Activated CD8-positive, alpha-beta memory T cell treated with anti-CD3 and anti-CD28 coated beads, Interleukin-2, amount 10 ng/mL, durations not matched to agents 7 days and 5 days (primary cell): ENCODE measurements at regions of chr17 and their contacts with region 1.

Region 1: GRCh38 chr17:75250009-75250471 is 11.4 kb downstream of the GGA3 start:
- DNase-seq: peak; percentile 85
- ATAC-seq: peak; percentile 98
- H3K4me3 Mint-ChIP-seq: peak overlapping the region; percentile 75
- H3K27ac Mint-ChIP-seq: peak overlapping the region; percentile 90
- H3K4me1 Mint-ChIP-seq: peaks cover 28% of the 10 kb centered on the region
- H3K27me3 Mint-ChIP-seq: no peaks in the 10 kb centered on the region

Region 2: GRCh38 chr17:75199886-75200618 is 50.0 kb before region 1 on chr17:
- CTCF ChIA-PET with region 1: interaction called, 15 read pairs
- DNase-seq: no peak
- ATAC-seq: no peak
- H3K4me3 Mint-ChIP-seq: no peak overlapping the region
- H3K27ac Mint-ChIP-seq: no peak overlapping the region
- H3K4me1 Mint-ChIP-seq: peaks cover 11% of the 10 kb centered on the region
- H3K27me3 Mint-ChIP-seq: no peaks in the 10 kb centered on the region

Region 3: DNA sequence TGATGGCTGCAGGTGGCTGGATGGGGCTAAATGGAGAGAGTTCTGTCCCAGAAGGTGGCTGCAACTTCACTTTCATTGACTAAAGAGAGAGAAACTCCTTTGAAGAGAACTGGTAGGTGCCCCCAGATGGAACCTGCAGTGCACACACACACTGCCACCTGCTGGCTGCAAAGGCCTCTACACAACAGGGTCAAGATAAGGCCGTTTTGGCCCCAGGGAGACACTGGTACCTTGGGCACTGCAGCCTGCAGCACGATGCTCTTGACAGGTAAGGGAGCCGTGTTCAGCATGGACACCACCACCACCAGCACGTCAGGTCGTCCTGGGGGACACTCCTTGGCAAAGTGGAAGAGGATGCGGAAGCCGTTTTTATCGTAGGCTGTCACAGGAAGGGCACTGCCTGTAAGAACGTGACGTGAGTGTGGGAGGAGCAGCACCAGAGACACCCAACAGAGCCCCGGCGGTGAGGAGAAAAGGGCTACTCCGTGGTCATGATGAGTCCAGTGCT is 11.3 kb before region 1 on chr17:
- CTCF ChIA-PET with region 1: interaction called, 33 read pairs
- DNase-seq: peak; percentile 72
- ATAC-seq: peak; percentile 74
- H3K4me3 Mint-ChIP-seq: no peak overlapping the region
- H3K27ac Mint-ChIP-seq: peak overlapping the region; percentile 70
- H3K4me1 Mint-ChIP-seq: peaks cover 32% of the 10 kb centered on the region
- H3K27me3 Mint-ChIP-seq: no peaks in the 10 kb centered on the region

Region 4: GRCh38 chr17:75261336-75262111 is 11.5 kb after region 1 on chr17 and contains the starts of genes GGA3 and MRPS7:
- CTCF ChIA-PET with region 1: interaction called, 36 read pairs
- DNase-seq: peak; percentile 97
- ATAC-seq: peak; percentile 96
- H3K4me3 Mint-ChIP-seq: peak within 1 kb of the TSS; percentile 94
- H3K27ac Mint-ChIP-seq: peak within 1 kb of the TSS; percentile 99
- H3K4me1 Mint-ChIP-seq: peaks cover 44% of the 10 kb centered on the region
- H3K27me3 Mint-ChIP-seq: no peaks in the 10 kb centered on the region
- total RNA-seq, gene GGA3: 84.6 to 90.2 TPM
- total RNA-seq, gene MRPS7: 49.5 to 56.9 TPM

Region 5: GRCh38 chr17:75313941-75314551 is 64.0 kb after region 1 on chr17:
- CTCF ChIA-PET with region 1: no interaction called
- DNase-seq: no peak
- ATAC-seq: no peak
- H3K4me3 Mint-ChIP-seq: no peak overlapping the region
- H3K27ac Mint-ChIP-seq: no peak overlapping the region
- H3K4me1 Mint-ChIP-seq: peaks cover 33% of the 10 kb centered on the region
- H3K27me3 Mint-ChIP-seq: no peaks in the 10 kb centered on the region

Region 6: DNA sequence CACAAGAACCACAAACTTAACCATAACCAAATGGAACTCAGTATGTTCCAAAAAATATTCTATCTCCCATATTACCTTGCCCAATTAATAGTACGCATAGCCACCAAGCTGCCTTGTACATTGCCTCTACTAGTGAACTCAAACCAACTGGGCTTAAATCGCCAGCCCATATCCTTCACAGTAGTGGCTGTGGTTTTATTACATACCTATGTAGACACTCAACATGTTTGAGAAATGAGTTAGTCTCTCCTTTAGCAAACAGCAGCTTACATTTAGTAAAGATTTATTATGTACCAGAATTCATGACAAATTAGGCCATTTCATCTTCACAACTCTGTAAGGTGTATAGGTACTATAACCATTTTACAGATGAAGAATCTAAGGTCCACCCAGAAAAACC is 114.0 kb after region 1 on chr17:
- CTCF ChIA-PET with region 1: no interaction called
- DNase-seq: no peak
- ATAC-seq: no peak
- H3K4me3 Mint-ChIP-seq: no peak overlapping the region
- H3K27ac Mint-ChIP-seq: no peak overlapping the region
- H3K4me1 Mint-ChIP-seq: peaks cover 82% of the 10 kb centered on the region
- H3K27me3 Mint-ChIP-seq: no peaks in the 10 kb centered on the region

Region 7: DNA sequence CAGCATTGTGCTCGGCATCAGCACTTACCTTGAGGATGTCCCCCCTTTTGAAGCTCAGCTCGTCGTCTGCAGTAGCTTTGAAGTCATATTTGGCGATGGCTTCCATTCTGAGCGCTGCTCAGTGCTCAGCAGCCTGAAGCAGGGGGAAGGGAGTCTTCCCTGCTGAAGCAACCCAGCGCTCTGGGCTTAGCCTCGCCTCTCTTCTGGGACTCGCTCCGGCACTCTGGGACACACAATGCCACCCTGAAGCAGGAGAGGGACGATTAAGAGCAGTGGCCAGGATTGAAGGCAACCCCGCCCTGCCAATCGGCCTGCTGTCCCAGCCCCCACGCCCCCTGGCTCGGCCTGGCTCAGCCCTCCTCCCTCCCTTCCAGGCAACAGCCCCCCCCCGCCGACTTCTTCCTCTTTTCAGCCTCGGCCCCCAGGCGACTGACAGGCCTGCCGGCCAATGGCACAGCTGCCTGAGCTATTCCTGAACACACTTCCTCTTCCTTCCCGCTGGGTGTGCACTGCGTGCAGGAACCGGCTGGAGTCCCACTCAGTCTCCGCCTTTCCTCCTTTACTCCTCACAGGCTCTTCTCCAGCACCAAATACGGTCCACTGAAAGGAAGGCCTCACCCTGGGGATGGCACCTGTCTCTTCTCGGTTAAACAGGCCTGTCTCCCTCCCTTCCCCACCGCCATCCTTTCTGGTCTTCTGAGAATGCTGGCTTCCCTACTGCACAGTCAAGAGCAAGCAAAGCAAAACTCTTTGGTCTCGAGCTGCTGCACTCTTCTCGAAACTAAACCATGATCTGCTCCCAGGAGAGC is 143.7 kb after region 1 on chr17:
- CTCF ChIA-PET with region 1: no interaction called
- DNase-seq: peak; percentile 91
- ATAC-seq: peak; percentile 96
- H3K4me3 Mint-ChIP-seq: peak overlapping the region; percentile 98
- H3K27ac Mint-ChIP-seq: peak overlapping the region; percentile 67
- H3K4me1 Mint-ChIP-seq: peaks cover 68% of the 10 kb centered on the region
- H3K27me3 Mint-ChIP-seq: no peaks in the 10 kb centered on the region